Prostate gland (tissue), 2 donors: ENCODE measurements at regions of chr1 and their contacts with region 1.

Region 1: DNA sequence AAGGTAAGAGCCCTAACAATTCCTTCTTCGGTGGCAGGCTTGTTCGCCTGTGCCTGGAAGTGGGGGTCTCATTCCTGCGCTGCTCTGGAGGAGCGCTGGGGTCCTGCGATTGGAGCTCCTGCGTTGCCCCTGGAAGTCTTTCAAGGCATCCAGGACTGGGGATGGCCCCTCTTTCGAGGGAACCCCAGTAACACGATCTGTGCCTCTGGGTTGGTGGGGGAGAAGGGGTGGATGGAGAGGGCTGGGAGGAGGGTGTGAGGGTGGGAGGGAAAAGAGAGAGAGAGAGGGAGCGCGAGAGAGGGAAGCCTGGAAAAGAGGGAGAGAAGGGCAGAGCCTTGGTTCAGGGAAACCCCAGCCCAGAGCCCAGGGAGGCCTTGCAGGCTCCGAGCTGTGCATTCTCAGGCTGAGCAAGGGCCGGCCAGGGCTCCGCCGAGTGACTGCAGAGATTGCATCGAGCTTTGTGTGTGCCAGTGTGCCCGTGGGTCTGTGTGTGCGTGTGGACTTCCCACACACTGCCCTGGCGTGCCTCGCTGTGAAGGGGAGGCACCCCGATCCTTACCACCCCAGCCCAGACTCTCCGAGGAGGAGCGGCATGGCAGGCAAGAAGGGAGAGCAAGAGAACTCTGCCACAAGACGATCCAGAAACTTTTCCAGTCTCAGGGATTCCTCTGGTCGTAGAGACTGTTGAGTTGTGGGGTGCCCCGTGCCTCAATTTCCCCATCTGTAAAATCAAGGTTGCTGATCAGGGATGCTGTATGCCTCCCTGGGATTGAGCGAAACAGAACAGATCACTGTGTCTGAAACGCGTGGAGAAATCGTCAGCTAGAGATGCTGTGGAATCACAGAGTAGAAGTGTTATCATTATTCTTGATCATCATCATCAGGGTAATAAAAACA is 619 bp downstream of the BCL9 start:
- DNase-seq: peak; percentile 38
- H3K4me3 ChIP-seq: peak overlapping the region; percentile 43 to 55
- H3K27ac ChIP-seq: peak overlapping the region; percentile 93 to 97
- H3K4me1 ChIP-seq: no peaks in the 10 kb centered on the region
- H3K27me3 ChIP-seq: no peaks in the 10 kb centered on the region
- CTCF ChIP-seq: no peak
- POLR2A ChIP-seq: peak; percentile 14

Region 2: DNA sequence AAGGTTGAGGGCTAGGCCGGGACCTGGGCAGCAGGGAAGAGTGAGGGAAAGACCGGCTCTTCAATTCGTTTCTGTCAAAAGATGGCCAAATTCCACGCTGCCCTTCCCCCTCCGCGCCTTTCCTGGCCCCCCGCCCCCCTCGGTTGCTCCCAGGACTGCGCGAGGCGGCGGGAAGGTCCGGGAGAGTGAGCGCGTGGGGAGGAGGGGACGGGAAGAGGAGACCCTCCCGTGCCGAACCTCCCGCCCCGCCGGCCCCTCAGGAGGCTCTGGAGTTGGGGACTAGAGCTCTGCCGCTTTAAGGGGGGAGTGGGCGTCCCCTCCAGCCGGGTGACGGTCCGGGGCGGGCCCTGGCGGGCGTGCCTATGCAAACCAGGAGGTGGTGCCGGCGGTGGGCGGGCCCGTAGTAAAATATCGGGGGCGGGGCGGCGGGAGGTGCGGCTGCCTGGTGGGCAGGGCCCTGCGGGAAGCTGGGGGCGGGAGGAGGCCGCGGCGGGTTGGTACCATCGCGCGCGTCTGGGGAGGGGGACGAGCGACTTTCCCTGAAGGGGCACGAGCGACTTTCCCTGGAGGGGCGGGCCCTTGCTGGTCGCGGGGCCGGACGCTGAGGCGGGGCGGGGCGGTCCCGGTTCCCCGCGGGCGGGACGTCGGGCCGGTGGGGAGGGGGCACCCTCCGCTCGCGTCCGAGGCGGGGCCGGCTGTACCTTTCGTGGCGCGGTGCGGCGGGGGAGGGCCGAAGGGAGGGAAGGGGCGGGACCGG is 57.6 kb after region 1 on chr1:
- intact Hi-C with region 1: loop called (anchors 1 kb)
- DNase-seq: peak; percentile 97
- H3K4me3 ChIP-seq: peak overlapping the region; percentile 56 to 80
- H3K27ac ChIP-seq: peak overlapping the region; percentile 90 to 92
- H3K4me1 ChIP-seq: peaks cover 6% of the 10 kb centered on the region
- H3K27me3 ChIP-seq: no peaks in the 10 kb centered on the region
- CTCF ChIP-seq: peak in 1 of 4 experiments; percentile 21
- POLR2A ChIP-seq: peak; percentile 82

Region 3: GRCh38 chr1:147627435-147628110 is 85.7 kb after region 1 on chr1:
- intact Hi-C with region 1: no loop called
- DNase-seq: peak; percentile 22
- H3K4me3 ChIP-seq: no peak overlapping the region
- H3K27ac ChIP-seq: peak overlapping the region in 1 of 2 donors; percentile 18
- H3K4me1 ChIP-seq: no peaks in the 10 kb centered on the region
- H3K27me3 ChIP-seq: no peaks in the 10 kb centered on the region
- CTCF ChIP-seq: peak; percentile 58 to 79 (median 72)
- POLR2A ChIP-seq: no peak

Region 4: GRCh38 chr1:147676290-147677053 is 134.6 kb after region 1 on chr1:
- intact Hi-C with region 1: no loop called
- DNase-seq: no peak
- H3K4me3 ChIP-seq: no peak overlapping the region
- H3K27ac ChIP-seq: no peak overlapping the region
- H3K4me1 ChIP-seq: no peaks in the 10 kb centered on the region
- H3K27me3 ChIP-seq: no peaks in the 10 kb centered on the region
- CTCF ChIP-seq: no peak
- POLR2A ChIP-seq: no peak